Activated CD4-positive, alpha-beta memory T cell treated with anti-CD3 and anti-CD28 coated beads for 36 hours (primary cell): ENCODE measurements at regions of chr10 and their contacts with region 1.

Region 1: GRCh38 chr10:69515699-69516259 is 57.4 kb downstream of the NEUROG3 start:
- DNase-seq: peak; percentile 86
- H3K4me3 Mint-ChIP-seq: no peak overlapping the region
- H3K27ac Mint-ChIP-seq: no peak overlapping the region
- H3K4me1 Mint-ChIP-seq: no peaks in the 10 kb centered on the region
- H3K27me3 Mint-ChIP-seq: no peaks in the 10 kb centered on the region

Region 2: DNA sequence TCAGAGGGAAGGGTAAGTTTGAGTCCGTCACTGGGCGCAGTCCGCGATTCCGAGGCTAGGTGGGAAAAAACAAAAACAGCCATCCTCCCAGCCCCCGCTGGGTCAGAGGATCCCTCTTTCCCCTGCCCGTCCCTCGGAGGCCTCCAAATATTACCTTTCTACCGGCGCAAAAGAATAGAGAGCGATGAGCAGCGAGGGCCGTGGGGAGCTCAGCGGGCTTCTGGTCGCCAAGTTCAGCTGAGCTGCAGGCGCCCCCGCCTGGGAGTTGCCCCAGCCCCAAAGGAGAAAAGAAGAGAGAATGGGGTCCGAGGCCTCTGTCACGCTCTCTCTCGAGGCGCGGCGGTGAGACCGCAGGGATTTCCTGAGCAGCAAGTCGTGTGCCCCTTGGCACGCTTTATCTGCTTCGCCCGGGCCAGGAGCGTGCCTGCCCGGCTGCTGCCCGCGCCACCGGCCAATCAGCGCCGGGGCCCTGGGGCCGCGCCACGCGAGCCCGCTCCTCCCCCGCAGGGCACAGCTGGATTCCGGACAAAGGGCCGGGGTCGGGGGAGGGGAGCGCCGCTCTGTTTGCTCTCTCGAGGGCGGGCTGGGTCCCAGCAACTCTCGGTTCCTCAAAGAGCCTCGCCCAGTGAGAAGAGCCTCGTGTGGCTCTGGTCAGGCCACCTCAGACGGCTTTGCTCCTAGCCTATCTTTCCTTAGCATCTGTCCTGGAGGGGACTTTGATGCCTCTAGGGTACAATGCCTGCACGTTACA is 57.5 kb after region 1 on chr10 and contains the start of gene NEUROG3:
- CTCF ChIA-PET with region 1: interaction called, 10 read pairs
- POLR2A ChIA-PET with region 1: no interaction called
- intact Hi-C with region 1: no loop called
- DNase-seq: peak; percentile 20
- H3K4me3 Mint-ChIP-seq: peak within 1 kb of the TSS; percentile 61
- H3K27ac Mint-ChIP-seq: no peak within 1 kb of the TSS
- H3K4me1 Mint-ChIP-seq: peaks cover 21% of the 10 kb centered on the region
- H3K27me3 Mint-ChIP-seq: peaks cover 75% of the 10 kb centered on the region
- total RNA-seq, gene NEUROG3: not detected

Region 3: DNA sequence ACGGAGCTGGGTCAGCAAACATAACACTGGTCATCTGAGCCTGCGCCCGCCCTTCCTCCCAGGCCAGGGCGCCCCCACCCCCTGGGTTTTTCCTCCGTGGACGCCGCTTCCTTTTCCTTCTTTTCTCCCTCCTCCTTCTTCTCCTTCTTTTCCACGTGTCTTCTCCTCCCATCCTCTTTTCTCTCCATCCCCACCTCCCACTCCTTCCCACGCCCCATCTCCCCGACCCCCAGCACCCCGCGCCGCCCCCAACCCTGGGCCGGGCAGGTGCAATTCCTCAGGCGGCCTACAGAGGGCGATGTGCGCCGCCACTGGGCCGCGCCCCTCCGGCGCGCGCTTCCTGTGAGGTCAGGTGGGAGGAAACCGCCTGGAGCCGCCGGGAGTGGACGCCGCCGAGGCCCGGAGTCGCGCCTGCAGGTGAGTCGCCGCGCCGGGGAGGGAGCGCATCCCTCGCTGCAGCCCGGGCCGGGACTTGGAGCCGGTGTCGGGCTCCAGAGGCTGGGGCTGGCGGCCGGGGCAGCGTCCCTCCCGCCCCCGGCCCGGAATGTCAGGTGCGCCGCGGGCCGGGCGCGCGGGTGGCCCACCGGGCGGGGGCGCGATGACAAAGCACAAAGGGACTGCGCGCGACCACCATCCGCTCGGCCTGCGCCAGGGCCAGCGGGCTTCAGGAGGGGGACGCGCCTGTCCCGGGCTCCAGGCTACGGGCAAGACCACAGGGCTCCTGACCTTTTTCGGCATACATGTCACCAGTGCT is 114.3 kb after region 1 on chr10 and contains the start of gene FAM241B:
- CTCF ChIA-PET with region 1: interaction called, 247 read pairs
- POLR2A ChIA-PET with region 1: no interaction called
- intact Hi-C with region 1: no loop called
- DNase-seq: peak; percentile 87
- H3K4me3 Mint-ChIP-seq: peak within 1 kb of the TSS; percentile 67
- H3K27ac Mint-ChIP-seq: no peak within 1 kb of the TSS
- H3K4me1 Mint-ChIP-seq: peaks cover 5% of the 10 kb centered on the region
- H3K27me3 Mint-ChIP-seq: no peaks in the 10 kb centered on the region
- total RNA-seq, gene FAM241B: 10.9 to 11.8 TPM

Region 4: DNA sequence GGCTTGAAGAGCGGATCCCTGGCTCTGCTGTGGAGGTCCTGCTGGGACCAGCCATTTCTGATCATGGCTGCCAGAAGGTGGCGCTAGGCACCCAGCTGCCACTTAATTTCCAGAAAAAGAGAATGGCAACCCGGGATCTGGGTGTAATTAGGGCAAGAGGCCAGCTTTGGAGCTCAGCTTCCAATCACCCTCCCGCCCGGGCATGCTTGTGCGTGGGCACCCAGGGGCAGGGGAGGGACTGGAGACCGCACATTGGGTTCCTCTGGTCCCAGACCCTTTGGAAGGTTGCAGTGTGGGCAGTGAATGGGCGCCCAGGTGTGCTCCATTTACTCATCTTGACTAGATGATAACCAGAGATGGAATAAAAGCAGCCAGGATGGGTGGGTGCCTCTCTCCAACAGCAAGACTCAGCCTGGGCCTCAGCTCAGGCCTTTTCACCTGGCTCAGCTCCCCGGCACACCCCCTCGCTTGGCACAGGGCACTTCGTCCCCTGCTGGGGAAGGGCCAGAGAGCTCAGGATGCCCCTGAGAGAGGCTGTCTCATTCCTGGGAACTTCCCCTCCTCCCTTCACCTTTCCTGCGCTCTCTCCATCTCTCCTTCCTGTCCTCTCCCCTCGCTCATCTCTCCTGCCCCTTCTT is 129.0 kb after region 1 on chr10:
- CTCF ChIA-PET with region 1: interaction called, 247 read pairs
- POLR2A ChIA-PET with region 1: no interaction called
- intact Hi-C with region 1: loop called (anchors 1 kb)
- DNase-seq: peak; percentile 62
- H3K4me3 Mint-ChIP-seq: no peak overlapping the region
- H3K27ac Mint-ChIP-seq: no peak overlapping the region
- H3K4me1 Mint-ChIP-seq: no peaks in the 10 kb centered on the region
- H3K27me3 Mint-ChIP-seq: no peaks in the 10 kb centered on the region

Region 5: DNA sequence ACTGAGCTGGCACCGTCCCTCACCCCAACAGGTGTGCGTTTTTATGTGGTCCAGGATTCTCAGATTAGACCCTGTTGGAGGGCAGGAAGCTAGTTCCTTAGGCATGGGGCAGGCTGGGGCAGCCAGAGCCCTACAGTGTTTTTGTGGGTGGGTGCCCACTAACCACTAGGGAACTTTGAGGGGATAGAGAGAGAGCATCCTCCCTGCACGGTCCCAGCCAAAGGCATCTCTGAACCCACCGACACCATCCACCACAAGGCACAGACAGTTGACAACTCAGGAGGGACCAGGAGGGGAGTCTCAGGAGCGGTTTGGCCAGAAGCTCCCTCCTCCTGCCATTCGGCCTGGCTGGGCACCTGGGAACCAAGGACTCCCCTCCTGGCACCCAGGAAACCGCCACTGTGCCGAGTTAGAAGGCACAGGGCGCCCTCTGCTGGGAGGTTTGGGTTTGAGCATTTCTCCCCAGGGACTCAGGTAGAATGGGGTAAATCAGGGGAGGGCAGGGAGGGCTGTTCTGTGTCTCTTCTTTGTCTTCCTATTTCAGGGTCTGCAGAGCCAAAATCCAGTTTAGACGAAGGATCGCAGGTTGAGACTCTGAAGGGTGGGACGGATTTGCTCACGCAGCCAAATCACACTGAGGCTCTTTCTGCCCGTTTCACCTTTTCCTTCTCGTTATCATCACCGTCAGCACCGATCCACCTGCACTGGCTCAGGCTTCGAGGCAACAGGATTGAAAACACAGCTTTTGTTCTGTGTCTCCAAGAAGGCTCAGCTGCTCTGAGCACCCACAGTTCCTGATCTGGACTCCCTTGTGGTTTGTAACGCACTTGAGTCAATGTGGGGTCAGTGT is 201.2 kb after region 1 on chr10:
- CTCF ChIA-PET with region 1: interaction called, 36 read pairs
- POLR2A ChIA-PET with region 1: no interaction called
- intact Hi-C with region 1: loop called (anchors 2 kb)
- DNase-seq: peak; percentile 73
- H3K4me3 Mint-ChIP-seq: no peak overlapping the region
- H3K27ac Mint-ChIP-seq: no peak overlapping the region
- H3K4me1 Mint-ChIP-seq: no peaks in the 10 kb centered on the region
- H3K27me3 Mint-ChIP-seq: peaks cover 8% of the 10 kb centered on the region